Activated CD4-positive, alpha-beta T cell treated with anti-CD3 and anti-CD28 coated beads, Interleukin-2, amount 10 ng/mL, durations not matched to agents 24 days and 14 days (primary cell): ENCODE measurements at regions of chr3 and their contacts with region 1.

Region 1: GRCh38 chr3:160003520-160004128 is 15.0 kb downstream of the IL12A start:
- DNase-seq: peak; percentile 79
- H3K4me3 Mint-ChIP-seq: no peak overlapping the region
- H3K27ac Mint-ChIP-seq: no peak overlapping the region
- H3K4me1 Mint-ChIP-seq: peaks cover 8% of the 10 kb centered on the region
- H3K27me3 Mint-ChIP-seq: peaks cover 2% of the 10 kb centered on the region

Region 2: DNA sequence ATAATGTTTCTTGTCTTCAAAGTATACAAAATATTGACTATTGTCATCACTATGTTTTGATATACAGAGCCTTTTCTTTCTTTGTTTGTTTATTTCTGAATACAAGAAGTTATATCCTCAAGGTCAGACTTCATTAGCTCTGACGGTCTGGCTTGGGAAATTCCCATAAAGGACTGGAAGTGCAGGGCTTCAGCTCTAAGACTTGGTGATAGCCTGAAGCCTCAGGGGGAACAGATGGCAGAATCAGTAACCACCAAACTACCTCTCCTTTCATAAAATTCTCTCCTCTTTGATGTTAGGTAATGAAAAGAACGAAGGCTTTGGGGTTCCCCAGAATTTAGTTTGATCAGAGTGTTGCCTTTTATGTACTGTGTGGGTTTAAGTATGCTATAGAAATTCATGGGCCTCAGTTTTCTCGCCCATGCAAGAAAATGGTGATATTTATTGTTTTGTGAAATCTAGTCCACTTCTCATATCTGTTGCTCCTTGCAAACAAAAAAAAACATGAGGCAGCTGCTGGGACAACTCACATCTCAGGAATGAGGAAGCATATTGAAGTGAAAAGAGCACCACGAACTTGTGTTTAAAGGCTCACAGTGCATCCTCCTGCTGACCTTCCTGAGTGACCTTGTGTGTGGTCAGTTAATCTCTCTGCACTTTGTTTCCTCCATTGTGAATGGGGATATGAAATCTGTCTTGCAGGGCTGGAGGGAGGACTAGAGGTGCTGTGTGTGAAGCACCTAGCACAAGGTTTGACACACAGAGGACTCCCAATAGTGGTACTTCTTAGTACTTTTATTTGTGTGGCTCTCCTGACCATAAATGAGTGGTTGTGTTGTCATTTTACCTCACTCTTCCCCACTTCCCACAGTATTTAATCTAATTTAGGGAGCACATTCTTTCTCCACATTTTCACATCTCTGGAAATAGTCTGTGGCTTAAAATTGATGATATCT is 584.8 kb before region 1 on chr3:
- intact Hi-C with region 1: no loop called
- DNase-seq: no peak
- H3K4me3 Mint-ChIP-seq: no peak overlapping the region
- H3K27ac Mint-ChIP-seq: no peak overlapping the region
- H3K4me1 Mint-ChIP-seq: no peaks in the 10 kb centered on the region
- H3K27me3 Mint-ChIP-seq: no peaks in the 10 kb centered on the region

Region 3: DNA sequence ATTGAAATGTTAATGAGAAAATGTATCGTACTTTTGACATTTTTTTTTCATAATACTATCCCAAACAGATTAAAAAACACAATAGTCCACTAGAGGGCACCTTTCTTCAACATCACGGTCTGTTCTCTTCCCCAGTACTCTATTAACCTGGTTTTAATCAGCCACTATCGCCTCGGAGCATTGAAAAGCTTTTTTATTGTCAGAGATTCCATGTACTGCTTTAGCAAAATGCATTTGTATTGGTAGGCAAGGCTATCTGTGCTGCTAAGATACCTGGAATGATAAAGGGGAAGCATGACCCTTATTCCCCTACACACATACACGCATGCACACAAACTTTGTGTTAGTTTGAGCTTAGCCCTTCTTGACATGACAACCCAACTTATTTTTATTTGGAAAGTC is 175.1 kb before region 1 on chr3:
- intact Hi-C with region 1: loop called (anchors 1 kb)
- DNase-seq: no peak
- H3K4me3 Mint-ChIP-seq: no peak overlapping the region
- H3K27ac Mint-ChIP-seq: no peak overlapping the region
- H3K4me1 Mint-ChIP-seq: no peaks in the 10 kb centered on the region
- H3K27me3 Mint-ChIP-seq: no peaks in the 10 kb centered on the region

Region 4: GRCh38 chr3:159884661-159885402 is 118.8 kb before region 1 on chr3:
- intact Hi-C with region 1: loop called (anchors 1 kb)
- DNase-seq: peak; percentile 62
- H3K4me3 Mint-ChIP-seq: no peak overlapping the region
- H3K27ac Mint-ChIP-seq: no peak overlapping the region
- H3K4me1 Mint-ChIP-seq: no peaks in the 10 kb centered on the region
- H3K27me3 Mint-ChIP-seq: peaks cover 25% of the 10 kb centered on the region

Region 5: DNA sequence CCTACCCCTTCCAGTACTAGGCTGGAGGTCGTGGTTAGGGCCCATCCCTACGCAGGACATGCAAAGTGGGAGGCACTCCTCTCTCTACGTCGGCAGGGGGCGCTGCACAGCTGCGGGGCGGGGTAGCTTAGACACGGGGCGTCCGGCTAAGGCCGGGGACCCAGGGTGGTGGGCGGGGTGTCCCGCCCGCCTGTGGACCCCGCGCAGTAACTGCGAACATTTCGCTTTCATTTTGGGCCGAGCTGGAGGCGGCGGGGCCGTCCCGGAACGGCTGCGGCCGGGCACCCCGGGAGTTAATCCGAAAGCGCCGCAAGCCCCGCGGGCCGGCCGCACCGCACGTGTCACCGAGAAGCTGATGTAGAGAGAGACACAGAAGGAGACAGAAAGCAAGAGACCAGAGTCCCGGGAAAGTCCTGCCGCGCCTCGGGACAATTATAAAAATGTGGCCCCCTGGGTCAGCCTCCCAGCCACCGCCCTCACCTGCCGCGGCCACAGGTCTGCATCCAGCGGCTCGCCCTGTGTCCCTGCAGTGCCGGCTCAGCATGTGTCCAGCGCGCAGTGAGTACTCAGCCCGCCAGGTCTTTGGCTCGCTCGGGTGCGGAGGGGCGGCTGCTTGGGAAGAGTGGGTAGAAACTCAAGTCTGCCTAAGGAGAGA is 14.9 kb before region 1 on chr3 and contains the start of gene IL12A:
- intact Hi-C with region 1: loop called (anchors 1 kb)
- DNase-seq: peak; percentile 95
- H3K4me3 Mint-ChIP-seq: peak within 1 kb of the TSS; percentile 74
- H3K27ac Mint-ChIP-seq: peak within 1 kb of the TSS; percentile 26
- H3K4me1 Mint-ChIP-seq: peaks cover 18% of the 10 kb centered on the region
- H3K27me3 Mint-ChIP-seq: peaks cover 22% of the 10 kb centered on the region
- total RNA-seq, gene IL12A: 0.21 and 0.59 TPM in 2 replicates